HAP-1 (cell line): ENCODE measurements at regions of chr14 and their contacts with region 1.

Region 1: GRCh38 chr14:76050797-76051392 is 65.3 kb downstream of the IFT43 start:
- DNase-seq: peak; percentile 46 to 74
- H3K4me3 ChIP-seq: no peak overlapping the region
- H3K4me1 ChIP-seq: no peaks in the 10 kb centered on the region
- H3K27me3 ChIP-seq: no peaks in the 10 kb centered on the region

Region 2: GRCh38 chr14:76352639-76353281 is 301.9 kb after region 1 on chr14:
- in situ Hi-C with region 1: loop called (anchors 10 kb)
- DNase-seq: peak; percentile 40 to 87
- H3K4me3 ChIP-seq: no peak overlapping the region
- H3K4me1 ChIP-seq: no peaks in the 10 kb centered on the region
- H3K27me3 ChIP-seq: no peaks in the 10 kb centered on the region; the same call in 1 of the 2 replicates

Region 3: DNA sequence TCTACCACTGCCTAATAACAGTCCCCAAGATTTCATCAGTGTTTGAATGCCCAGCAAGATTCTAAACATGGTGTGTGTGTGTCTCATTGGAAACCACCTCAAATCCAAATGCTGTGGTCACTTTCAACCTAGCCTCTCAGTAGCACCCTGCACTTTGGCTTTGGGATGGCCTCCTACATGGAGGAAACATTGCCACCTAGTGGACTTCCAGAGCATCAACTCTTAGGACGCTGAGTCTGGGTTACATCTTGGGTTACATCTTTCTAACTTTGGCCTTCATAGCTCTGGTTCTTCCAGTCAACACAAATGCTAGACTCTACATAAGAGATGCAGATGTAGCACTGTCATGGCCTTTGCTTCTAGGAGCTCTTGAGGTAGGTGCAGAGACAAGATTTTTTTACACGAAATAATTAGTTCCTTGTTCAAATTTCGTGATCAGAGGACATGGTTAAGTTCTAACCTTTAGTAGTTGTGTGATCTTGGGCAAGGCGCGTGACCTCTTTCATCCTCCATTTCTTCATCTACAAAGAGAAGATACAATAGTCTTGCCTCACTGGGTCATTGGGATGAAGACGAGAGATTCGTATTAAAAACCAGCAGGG is 596.9 kb after region 1 on chr14:
- in situ Hi-C with region 1: loop called (anchors 5 kb)
- DNase-seq: peak; percentile 54 to 56
- H3K4me3 ChIP-seq: no peak overlapping the region
- H3K4me1 ChIP-seq: no peaks in the 10 kb centered on the region
- H3K27me3 ChIP-seq: peaks cover 3% of the 10 kb centered on the region; the same call in 1 of the 2 replicates